Activated naive CD4-positive, alpha-beta T cell treated with anti-CD3 and anti-CD28 coated beads for 36 hours (primary cell): ENCODE measurements at regions of chr3 and their contacts with region 1.

Region 1: DNA sequence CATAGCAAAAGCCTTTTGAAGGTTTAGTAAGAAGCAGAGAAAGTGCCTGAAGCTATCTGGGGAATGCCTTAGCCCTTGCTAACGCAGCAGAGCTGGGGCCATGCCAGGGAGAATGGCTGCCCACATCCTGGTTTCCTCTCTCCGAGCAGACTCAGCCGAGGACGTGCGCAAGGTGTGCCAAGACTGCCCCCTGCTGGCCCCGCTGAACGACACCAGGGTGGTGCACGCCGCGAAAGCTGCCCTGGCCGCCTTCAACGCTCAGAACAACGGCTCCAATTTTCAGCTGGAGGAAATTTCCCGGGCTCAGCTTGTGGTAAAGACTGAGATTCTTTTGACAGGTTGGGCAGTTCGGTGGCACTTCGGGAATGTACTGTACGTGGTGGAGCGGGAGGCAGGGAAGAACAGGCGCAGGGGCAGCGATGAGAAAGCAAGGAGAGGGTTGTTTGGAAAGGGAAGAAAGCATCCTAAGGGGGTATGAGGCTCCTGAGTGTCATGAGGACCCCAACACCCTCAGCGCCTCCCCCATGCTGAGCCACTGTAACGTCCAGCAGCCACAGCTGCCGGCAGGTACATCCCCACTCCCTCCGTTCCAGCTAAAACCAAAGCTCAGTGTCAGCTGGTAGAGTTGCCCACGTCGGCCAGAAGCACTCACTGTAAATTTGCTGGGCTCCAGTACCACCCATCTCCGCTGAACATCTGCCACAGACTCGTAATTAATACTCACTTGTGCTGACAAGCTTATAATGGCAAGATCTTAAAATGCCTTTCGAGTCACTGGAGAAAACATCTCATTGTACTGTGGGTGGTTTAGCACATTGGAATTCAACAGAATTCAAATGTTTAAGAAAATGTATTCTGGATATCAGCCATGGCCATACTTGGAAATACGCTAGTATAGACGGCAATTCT is 4.4 kb downstream of the AHSG start:
- DNase-seq: peak; percentile 97
- H3K4me3 Mint-ChIP-seq: peak overlapping the region; percentile 56
- H3K27ac Mint-ChIP-seq: peak overlapping the region; percentile 81
- H3K4me1 Mint-ChIP-seq: peaks cover 18% of the 10 kb centered on the region
- H3K27me3 Mint-ChIP-seq: peaks cover 16% of the 10 kb centered on the region

Region 2: GRCh38 chr3:185983495-185984141 is 633.7 kb before region 1 on chr3:
- CTCF ChIA-PET with region 1: interaction called, 12 read pairs
- intact Hi-C with region 1: loop called (anchors 1 kb)
- DNase-seq: peak; percentile 67
- H3K4me3 Mint-ChIP-seq: no peak overlapping the region
- H3K27ac Mint-ChIP-seq: peak overlapping the region; percentile 41
- H3K4me1 Mint-ChIP-seq: peaks cover 3% of the 10 kb centered on the region
- H3K27me3 Mint-ChIP-seq: peaks cover 8% of the 10 kb centered on the region

Region 3: DNA sequence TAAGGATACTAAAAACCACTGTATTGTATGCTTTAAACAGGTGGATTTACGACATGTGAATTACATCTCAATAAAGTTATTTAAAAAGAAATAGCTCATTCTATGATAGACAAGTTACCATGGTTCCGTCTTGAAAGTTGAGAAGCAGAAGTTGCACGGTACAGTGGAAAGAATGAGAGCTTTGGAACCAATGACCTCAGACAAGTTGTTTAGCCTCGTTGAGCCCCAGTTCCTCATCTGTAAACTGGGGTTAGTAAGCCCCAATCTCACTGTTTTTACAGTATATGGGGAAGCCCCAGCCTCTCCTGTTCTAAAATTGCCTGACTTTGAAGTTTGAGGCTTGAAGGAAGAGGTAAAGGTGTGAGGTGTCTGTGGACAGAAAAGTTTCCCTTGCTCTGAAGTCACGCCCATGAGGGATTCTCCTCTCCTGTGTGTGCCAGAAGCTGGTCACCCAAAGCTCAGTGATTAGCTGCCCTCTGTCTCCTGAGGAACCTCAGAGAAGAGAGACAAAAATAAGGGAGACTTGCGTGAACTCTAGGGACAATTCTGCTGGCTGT is 83.1 kb before region 1 on chr3:
- CTCF ChIA-PET with region 1: interaction called, 59 read pairs
- intact Hi-C with region 1: loop called (anchors 1 kb)
- DNase-seq: peak; percentile 76
- H3K4me3 Mint-ChIP-seq: peak overlapping the region; percentile 61
- H3K27ac Mint-ChIP-seq: peak overlapping the region; percentile 97
- H3K4me1 Mint-ChIP-seq: peaks cover 94% of the 10 kb centered on the region
- H3K27me3 Mint-ChIP-seq: no peaks in the 10 kb centered on the region

Region 4: GRCh38 chr3:186596568-186597287 is 20.6 kb before region 1 on chr3:
- CTCF ChIA-PET with region 1: interaction called, 35 read pairs
- intact Hi-C with region 1: no loop called
- DNase-seq: no peak
- H3K4me3 Mint-ChIP-seq: no peak overlapping the region
- H3K27ac Mint-ChIP-seq: no peak overlapping the region
- H3K4me1 Mint-ChIP-seq: no peaks in the 10 kb centered on the region
- H3K27me3 Mint-ChIP-seq: no peaks in the 10 kb centered on the region

Region 5: GRCh38 chr3:186772701-186773424 is 155.6 kb after region 1 on chr3:
- CTCF ChIA-PET with region 1: interaction called, 17 read pairs
- intact Hi-C with region 1: no loop called
- DNase-seq: peak; percentile 83
- H3K4me3 Mint-ChIP-seq: peak overlapping the region; percentile 95
- H3K27ac Mint-ChIP-seq: peak overlapping the region; percentile 95
- H3K4me1 Mint-ChIP-seq: peaks cover 10% of the 10 kb centered on the region
- H3K27me3 Mint-ChIP-seq: no peaks in the 10 kb centered on the region

Region 6: DNA sequence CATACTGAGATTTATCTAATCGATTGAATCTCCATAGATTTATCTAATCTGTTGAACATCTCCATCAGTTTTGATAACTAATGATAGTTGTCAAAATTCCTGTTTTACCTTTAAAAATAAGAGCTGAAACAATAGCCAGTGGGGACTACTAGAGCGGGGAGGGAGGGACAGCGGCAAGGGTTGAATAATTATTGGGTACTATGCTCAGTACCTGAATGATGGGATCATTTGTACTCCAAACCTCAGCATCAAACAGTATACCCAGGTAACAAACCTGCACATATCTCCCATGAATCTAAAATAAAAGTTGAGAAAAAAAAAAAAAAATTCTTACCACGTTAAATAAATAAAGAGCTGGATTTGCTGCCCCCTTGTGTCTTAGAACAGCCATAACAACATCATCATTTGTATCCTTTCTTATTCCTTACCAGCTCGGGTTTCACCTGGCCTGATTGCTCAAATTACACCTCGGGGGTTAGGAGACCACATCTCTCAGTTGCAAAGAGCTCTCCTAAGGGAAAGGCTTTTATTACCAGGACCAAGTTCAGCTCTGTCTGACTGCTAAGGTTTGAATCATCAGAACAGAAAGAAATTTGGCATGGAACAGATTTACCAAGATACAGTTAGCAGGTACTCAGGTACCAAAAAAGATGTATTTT is 547.7 kb after region 1 on chr3:
- CTCF ChIA-PET with region 1: no interaction called
- intact Hi-C with region 1: loop called (anchors 10 kb)
- DNase-seq: peak; percentile 47
- H3K4me3 Mint-ChIP-seq: no peak overlapping the region
- H3K27ac Mint-ChIP-seq: no peak overlapping the region
- H3K4me1 Mint-ChIP-seq: peaks cover 6% of the 10 kb centered on the region
- H3K27me3 Mint-ChIP-seq: no peaks in the 10 kb centered on the region